H1 (cell line): ENCODE measurements at regions of chr13 and their contacts with region 1.

Region 1: DNA sequence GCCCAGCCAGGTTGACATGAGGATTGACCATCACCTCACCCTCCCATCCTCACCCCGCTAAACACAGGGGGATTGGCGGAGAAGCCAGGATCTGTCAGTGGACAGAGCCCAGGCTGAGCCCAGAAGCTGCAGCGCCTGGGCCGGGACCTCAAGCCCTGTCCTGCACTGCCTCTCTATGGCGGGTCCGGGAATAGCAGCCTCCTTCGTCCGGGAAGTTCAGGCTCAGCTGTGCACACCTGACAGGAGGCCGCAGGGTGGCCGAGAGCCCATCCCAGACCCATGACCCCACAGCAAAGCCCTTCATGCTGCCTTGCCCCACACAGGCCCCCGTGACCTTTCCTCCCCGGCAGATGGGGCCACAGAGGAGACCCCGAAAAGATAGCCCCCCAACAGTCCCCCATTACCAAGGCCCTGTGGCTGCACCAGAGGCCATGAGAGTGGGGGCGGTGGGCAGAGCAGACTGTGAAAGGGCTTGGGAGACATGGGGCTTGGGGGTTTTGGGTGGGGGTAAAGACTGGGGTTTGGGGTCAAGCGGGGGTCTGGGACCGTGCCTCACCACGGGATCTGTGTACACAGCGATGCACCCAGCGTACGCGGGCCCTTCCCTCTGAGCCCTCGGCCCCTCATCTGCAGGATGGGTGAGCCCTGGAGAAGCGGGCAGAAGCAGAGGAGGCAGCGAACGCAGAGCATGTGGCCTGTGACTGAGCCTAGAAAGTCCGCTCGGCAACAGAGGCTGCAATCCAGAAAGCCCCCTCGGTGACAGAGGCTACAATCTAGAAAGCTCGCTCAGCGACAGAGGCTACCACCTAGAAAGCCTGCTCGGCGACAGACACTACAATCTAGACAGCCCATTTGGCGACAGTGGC is 68.1 kb downstream of the SPACA7 start:
- DNase-seq: peak; percentile 64 to 98
- H3K4me3 ChIP-seq: no peak overlapping the region
- H3K27ac ChIP-seq: no peak overlapping the region
- H3K4me1 ChIP-seq: peaks cover 0 to 4% (median 1%) of the 10 kb centered on the region in 4 experiments; a peak in 2 of 7 replicates
- H3K27me3 ChIP-seq: peaks cover 0 to 3% (median under 1%) of the 10 kb centered on the region in 4 experiments; a peak in 3 of 7 replicates
- CTCF ChIP-seq: peak in 2 of 3 experiments; percentile 94 to 99; a peak in 3 of 4 replicates
- EP300 ChIP-seq: no peak
- POLR2A ChIP-seq: no peak
- RAD21 ChIP-seq: peak; percentile 100

Region 2: GRCh38 chr13:112066624-112067004 is 377.6 kb before region 1 on chr13:
- CTCF ChIA-PET with region 1: interaction called, 51 read pairs
- POLR2A ChIA-PET with region 1: no interaction called
- DNase-seq: peak in 1 of 2 experiments; percentile 82
- H3K4me3 ChIP-seq: peak overlapping the region; percentile 21 to 66 (median 32)
- H3K27ac ChIP-seq: no peak overlapping the region
- H3K4me1 ChIP-seq: peaks cover 0 to 28% (median 10%) of the 10 kb centered on the region in 4 experiments; a peak in 6 of 7 replicates
- H3K27me3 ChIP-seq: peaks cover 83 to 95% (median 89%) of the 10 kb centered on the region in 4 experiments
- CTCF ChIP-seq: no peak
- EP300 ChIP-seq: 0 out of 3 replicates have a peak, but pooled peaks of 1 of the 2 experiments have one; percentile 4
- POLR2A ChIP-seq: no peak
- RAD21 ChIP-seq: no peak

Region 3: GRCh38 chr13:112131713-112132113 is 312.5 kb before region 1 on chr13:
- CTCF ChIA-PET with region 1: interaction called, 12 read pairs
- POLR2A ChIA-PET with region 1: no interaction called
- DNase-seq: no peak
- H3K4me3 ChIP-seq: no peak overlapping the region
- H3K27ac ChIP-seq: no peak overlapping the region
- H3K4me1 ChIP-seq: no peaks in the 10 kb centered on the region
- H3K27me3 ChIP-seq: peaks cover 0 to 4% (median 2%) of the 10 kb centered on the region in 4 experiments; a peak in 1 of 7 replicates
- CTCF ChIP-seq: no peak
- EP300 ChIP-seq: no peak
- POLR2A ChIP-seq: no peak
- RAD21 ChIP-seq: no peak

Region 4: DNA sequence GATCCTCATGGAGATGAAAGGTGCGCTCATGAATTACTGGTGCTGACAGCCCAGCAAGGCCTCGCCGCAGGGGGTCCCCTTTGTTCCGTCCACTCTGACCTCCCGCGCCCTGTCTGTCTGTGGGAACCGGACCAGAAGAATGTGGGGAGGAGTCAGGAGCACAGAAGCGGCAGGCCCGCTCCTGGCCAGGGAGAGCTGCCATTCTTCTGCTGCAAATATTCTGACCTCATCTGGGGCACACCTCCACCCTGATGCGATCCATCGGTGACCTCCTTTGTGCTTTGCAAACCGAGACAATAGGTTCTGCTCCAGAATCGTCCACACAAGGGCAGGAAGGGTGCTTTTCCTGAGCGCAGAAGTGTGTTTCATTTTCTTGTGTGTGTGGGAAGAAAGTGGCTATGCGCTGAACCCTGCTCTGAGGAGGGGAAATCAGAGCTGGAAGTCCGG is 239.3 kb before region 1 on chr13:
- CTCF ChIA-PET with region 1: interaction called, 17 read pairs
- POLR2A ChIA-PET with region 1: no interaction called
- DNase-seq: peak in 1 of 2 experiments; percentile 69
- H3K4me3 ChIP-seq: peak overlapping the region; percentile 1 to 52 (median 20); a peak in 7 of 8 replicates
- H3K27ac ChIP-seq: no peak overlapping the region
- H3K4me1 ChIP-seq: peaks cover 2 to 16% (median 9%) of the 10 kb centered on the region in 4 experiments
- H3K27me3 ChIP-seq: peaks cover 0 to 38% (median 29%) of the 10 kb centered on the region in 4 experiments; a peak in 6 of 7 replicates
- CTCF ChIP-seq: no peak
- EP300 ChIP-seq: no peak
- POLR2A ChIP-seq: no peak
- RAD21 ChIP-seq: no peak

Region 5: GRCh38 chr13:112346173-112346898 is 97.9 kb before region 1 on chr13:
- CTCF ChIA-PET with region 1: interaction called, 26 read pairs
- POLR2A ChIA-PET with region 1: no interaction called
- DNase-seq: peak in 1 of 2 experiments; percentile 68
- H3K4me3 ChIP-seq: 0 out of 8 replicates have a peak overlapping the region, but pooled peaks of 1 of the 4 experiments have one; percentile 5
- H3K27ac ChIP-seq: no peak overlapping the region
- H3K4me1 ChIP-seq: peaks cover 7 to 31% (median 20%) of the 10 kb centered on the region in 4 experiments
- H3K27me3 ChIP-seq: peaks cover 0 to 22% (median 12%) of the 10 kb centered on the region in 4 experiments; a peak in 4 of 7 replicates
- CTCF ChIP-seq: peak in 2 of 3 experiments; percentile 5 to 16; a peak in 3 of 4 replicates
- EP300 ChIP-seq: no peak
- POLR2A ChIP-seq: no peak
- RAD21 ChIP-seq: peak; percentile 5 to 28; a peak in 1 of 4 replicates